Cardiac septum (tissue), 1 donor: ENCODE measurements at regions of chr5 and their contacts with region 1.

Region 1: GRCh38 chr5:5374009-5374715 is 48.3 kb upstream of the ICE1 start:
- DNase-seq: no peak

Region 2: DNA sequence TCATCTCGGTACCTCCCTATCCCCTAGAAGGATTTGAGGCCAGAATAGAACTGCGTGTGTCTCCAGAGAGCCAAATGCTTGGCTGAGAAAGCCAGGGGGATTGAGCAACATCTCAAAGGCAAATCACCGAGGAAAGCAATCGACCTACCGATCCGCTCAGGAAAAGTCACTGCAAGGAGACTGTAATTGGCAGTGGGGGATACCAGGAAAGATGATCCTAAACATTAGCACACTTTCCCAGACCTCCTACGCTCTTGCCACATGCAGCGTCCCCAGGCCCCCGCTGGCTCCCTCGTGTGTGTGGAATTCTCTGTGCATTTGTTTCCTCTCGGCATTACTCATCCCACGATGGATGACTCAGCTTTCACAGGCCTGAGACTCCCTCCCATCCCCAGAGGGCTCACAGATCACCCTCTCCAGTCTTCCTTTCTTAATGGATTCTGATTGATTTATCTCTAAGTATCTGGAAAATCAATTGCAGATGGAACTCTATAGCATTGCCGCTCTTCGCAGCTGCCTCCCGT is 33.9 kb before region 1 on chr5:
- intact Hi-C with region 1: loop called (anchors 2 kb)
- DNase-seq: no peak

Region 3: GRCh38 chr5:5726401-5726800 is 352.2 kb after region 1 on chr5:
- intact Hi-C with region 1: no loop called
- DNase-seq: no peak